Activated CD4-positive, alpha-beta T cell treated with anti-CD3 and anti-CD28 coated beads for 36 hours (primary cell): ENCODE measurements at regions of chr18 and their contacts with region 1.

Region 1: GRCh38 chr18:21740724-21741510 is at the start of gene MIB1:
- DNase-seq: peak; percentile 62
- ATAC-seq: peak; percentile 73
- H3K4me3 Mint-ChIP-seq: peak within 1 kb of the TSS; percentile 93
- H3K27ac Mint-ChIP-seq: peak within 1 kb of the TSS; percentile 96
- H3K4me1 Mint-ChIP-seq: peaks cover 40% of the 10 kb centered on the region
- H3K27me3 Mint-ChIP-seq: no peaks in the 10 kb centered on the region
- total RNA-seq, gene MIB1: 24.7 to 33.6 TPM

Region 2: GRCh38 chr18:21704603-21705364 is 36.1 kb before region 1 on chr18 and contains the start of gene ABHD3:
- CTCF ChIA-PET with region 1: no interaction called
- POLR2A ChIA-PET with region 1: interaction called, 9 read pairs
- intact Hi-C with region 1: loop called (anchors 1 kb)
- DNase-seq: peak; percentile 93
- ATAC-seq: peak; percentile 95
- H3K4me3 Mint-ChIP-seq: peak within 1 kb of the TSS; percentile 87
- H3K27ac Mint-ChIP-seq: peak within 1 kb of the TSS; percentile 93
- H3K4me1 Mint-ChIP-seq: peaks cover 24% of the 10 kb centered on the region
- H3K27me3 Mint-ChIP-seq: no peaks in the 10 kb centered on the region
- total RNA-seq, gene ABHD3: 13.7 to 14.3 TPM